MCF 10A (cell line): ENCODE measurements at regions of chr1 and their contacts with region 1.

Region 1: DNA sequence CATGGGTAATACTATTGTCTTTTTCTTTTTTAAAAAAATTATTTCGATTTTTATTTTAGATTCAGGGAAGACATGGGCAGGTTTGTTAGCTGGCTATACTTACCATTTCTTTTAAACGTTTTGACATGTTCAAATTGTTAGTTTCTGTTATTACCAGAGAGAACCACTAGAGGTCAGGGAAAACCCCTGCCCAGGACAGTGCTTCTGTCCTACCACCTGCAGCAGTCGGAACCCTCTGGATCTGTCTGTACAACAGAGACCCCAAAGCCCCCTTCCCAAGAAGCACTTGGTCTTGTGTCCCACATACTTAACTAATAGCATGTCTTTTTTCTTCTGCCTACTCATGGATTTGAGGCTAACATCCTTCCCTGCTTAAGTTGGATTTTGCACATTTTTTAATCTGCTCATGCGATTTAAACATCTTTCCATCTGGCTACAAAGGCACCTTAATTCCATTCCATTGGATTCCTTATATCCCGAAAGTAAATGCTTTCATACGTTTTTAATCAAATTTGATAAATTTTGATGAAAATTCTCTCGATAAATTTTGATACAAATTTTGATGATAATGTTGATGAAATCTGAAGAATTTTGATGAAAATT is 10.0 kb upstream of the C1orf115 start:
- DNase-seq: peak; percentile 75
- H3K4me3 Mint-ChIP-seq: no peak overlapping the region
- H3K27ac Mint-ChIP-seq: no peak overlapping the region
- H3K4me1 Mint-ChIP-seq: peaks cover 7% of the 10 kb centered on the region
- H3K27me3 Mint-ChIP-seq: no peaks in the 10 kb centered on the region
- CTCF ChIP-seq: peak; percentile 95

Region 2: GRCh38 chr1:220669005-220669404 is 11.2 kb before region 1 on chr1:
- CTCF ChIA-PET with region 1: interaction called, 10 read pairs
- POLR2A ChIA-PET with region 1: interaction called, 3 read pairs
- intact Hi-C with region 1: no loop called
- DNase-seq: no peak
- H3K4me3 Mint-ChIP-seq: no peak overlapping the region
- H3K27ac Mint-ChIP-seq: no peak overlapping the region
- H3K4me1 Mint-ChIP-seq: no peaks in the 10 kb centered on the region
- H3K27me3 Mint-ChIP-seq: no peaks in the 10 kb centered on the region
- CTCF ChIP-seq: no peak

Region 3: DNA sequence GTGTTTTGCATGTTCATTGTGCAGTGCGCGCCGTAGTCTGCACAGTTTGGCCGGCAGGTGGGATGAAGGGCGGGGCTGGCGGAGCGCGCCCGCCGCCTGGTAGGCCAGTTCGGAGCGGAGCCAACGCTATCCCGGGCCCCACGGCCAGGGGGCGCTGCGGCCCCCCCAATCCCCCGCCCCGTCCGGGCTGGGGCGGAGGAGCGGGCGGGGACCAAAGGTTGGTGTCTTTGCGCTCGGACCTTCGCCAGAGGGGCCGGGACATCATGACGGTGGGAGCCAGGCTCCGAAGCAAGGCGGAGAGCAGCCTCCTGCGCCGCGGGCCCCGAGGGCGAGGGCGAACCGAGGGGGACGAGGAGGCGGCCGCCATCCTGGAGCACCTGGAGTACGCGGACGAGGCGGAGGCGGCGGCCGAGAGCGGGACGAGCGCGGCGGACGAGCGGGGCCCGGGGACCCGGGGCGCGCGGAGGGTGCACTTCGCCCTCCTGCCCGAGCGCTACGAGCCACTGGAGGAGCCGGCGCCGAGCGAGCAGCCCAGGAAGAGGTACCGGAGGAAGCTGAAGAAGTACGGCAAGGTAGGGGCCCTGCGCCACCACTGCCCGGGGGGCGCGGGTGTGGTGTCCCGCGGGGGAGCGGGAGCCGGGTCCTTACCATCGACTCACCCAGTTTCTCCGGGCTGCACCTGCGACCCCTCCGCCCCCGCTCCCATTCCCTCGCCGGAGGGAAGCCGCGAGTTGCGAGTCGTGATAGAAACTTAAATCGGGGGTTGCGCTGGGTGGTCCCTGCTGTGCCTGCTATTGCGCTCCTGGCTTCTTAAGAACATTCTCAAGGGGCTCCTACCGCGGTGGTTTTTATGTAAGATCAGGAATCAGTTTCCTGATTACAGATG is 10.2 kb after region 1 on chr1 and contains the start of gene C1orf115:
- CTCF ChIA-PET with region 1: interaction called, 20 read pairs
- POLR2A ChIA-PET with region 1: no interaction called
- intact Hi-C with region 1: no loop called
- DNase-seq: peak; percentile 81
- H3K4me3 Mint-ChIP-seq: peak within 1 kb of the TSS; percentile 83
- H3K27ac Mint-ChIP-seq: no peak within 1 kb of the TSS
- H3K4me1 Mint-ChIP-seq: peaks cover 7% of the 10 kb centered on the region
- H3K27me3 Mint-ChIP-seq: no peaks in the 10 kb centered on the region
- CTCF ChIP-seq: peak; percentile 100
- total RNA-seq, gene C1orf115: 1.6 TPM in 2 replicates

Region 4: DNA sequence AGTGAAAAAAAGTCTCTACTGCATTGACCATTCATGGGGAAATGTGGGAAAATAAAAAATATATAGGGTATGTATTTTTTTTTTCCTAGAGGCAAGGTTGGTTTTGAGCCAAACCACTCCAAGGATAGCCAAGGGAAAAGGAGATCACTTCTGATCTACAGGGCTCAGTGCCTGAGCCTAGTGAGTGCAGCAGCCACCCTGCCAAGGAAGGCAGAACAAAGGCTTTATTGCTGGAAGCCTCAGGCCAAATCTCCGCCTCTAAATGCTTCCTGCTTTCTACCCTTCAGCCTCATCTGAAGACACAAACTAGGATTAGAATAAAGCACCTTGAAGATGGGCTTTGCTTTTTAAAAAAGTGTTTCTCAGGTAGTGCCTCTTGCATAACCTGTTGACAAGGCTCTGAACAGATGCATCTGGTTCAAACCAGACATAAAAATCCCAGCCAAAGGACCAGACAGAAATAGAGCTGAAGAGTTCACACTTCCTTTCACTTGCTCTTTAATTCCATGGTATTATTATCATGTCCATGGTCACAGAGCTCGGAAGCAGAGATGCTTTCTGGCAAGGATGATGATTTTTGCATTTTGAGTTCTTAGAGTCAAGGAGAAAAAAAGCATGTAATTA is 20.5 kb after region 1 on chr1:
- CTCF ChIA-PET with region 1: interaction called, 12 read pairs
- POLR2A ChIA-PET with region 1: no interaction called
- intact Hi-C with region 1: no loop called
- DNase-seq: peak; percentile 28
- H3K4me3 Mint-ChIP-seq: no peak overlapping the region
- H3K27ac Mint-ChIP-seq: no peak overlapping the region
- H3K4me1 Mint-ChIP-seq: no peaks in the 10 kb centered on the region
- H3K27me3 Mint-ChIP-seq: no peaks in the 10 kb centered on the region
- CTCF ChIP-seq: no peak